Natural killer cell (primary cell): ENCODE measurements at regions of chr1 and their contacts with region 1.

Region 1: GRCh38 chr1:161021165-161021960 is 411 bp upstream of the F11R start:
- DNase-seq: peak; percentile 71 to 93
- ATAC-seq: peak; percentile 88 to 94 (median 93)
- H3K4me3 ChIP-seq: peak overlapping the region; percentile 87
- H3K4me3 Mint-ChIP-seq: peak overlapping the region; percentile 95
- H3K27ac ChIP-seq: peak overlapping the region; percentile 74
- H3K27ac Mint-ChIP-seq: peak overlapping the region; percentile 89 to 90
- H3K4me1 ChIP-seq: peaks cover 23% of the 10 kb centered on the region
- H3K4me1 Mint-ChIP-seq: peaks cover 28 to 38% of the 10 kb centered on the region in 2 donors
- H3K27me3 ChIP-seq: no peaks in the 10 kb centered on the region
- H3K27me3 Mint-ChIP-seq: no peaks in the 10 kb centered on the region
- CTCF ChIP-seq: no peak

Region 2: DNA sequence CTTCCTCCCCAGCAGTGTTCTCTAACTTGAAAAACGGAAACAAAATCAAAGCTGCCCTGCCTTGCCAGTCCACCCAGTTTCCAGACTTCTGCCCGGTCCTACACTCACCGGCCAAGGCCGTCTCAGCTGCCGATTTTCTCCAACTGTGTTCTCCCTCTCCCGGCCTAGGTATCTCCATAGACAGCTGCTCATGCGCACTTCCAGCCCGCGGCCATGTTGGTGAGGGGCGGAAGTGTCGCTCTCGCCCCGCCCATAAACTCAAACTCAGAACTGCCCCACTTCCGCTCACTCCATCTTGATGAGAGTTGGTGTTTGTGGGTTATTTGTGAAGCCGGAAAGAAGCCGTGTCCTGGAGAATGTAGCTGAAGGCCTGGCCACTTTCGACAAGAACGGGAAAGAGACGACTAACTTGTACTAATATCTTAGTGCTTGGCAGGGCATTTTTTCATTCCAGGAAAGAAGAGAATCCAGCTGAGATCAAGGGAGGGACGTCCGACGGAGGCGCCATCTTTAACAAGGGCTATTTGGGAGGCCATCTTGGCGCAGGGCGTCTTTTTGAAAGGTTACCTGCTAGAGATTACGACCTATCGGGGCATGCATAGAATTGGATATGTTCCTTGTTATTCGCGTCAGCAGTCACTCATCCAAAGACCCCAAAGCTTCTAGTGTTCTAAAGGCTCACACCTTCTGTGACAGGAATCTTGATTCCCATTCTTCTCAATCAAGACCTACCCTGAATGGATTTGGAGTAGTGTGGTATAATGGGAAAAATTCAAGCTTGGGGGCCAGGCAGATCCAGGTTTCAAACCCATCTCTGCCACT is 24.6 kb after region 1 on chr1 and contains the start of gene USF1:
- intact Hi-C with region 1: loop called (anchors 2 kb)
- DNase-seq: peak; percentile 93 to 98
- ATAC-seq: peak; percentile 79 to 92 (median 87)
- H3K4me3 ChIP-seq: peak within 1 kb of the TSS; percentile 90
- H3K4me3 Mint-ChIP-seq: peak within 1 kb of the TSS; percentile 97
- H3K27ac ChIP-seq: peak within 1 kb of the TSS; percentile 88
- H3K27ac Mint-ChIP-seq: peak within 1 kb of the TSS; percentile 98 to 99
- H3K4me1 ChIP-seq: peaks cover 35% of the 10 kb centered on the region
- H3K4me1 Mint-ChIP-seq: peaks cover 37 to 72% of the 10 kb centered on the region in 2 donors
- H3K27me3 ChIP-seq: no peaks in the 10 kb centered on the region
- H3K27me3 Mint-ChIP-seq: no peaks in the 10 kb centered on the region
- CTCF ChIP-seq: no peak
- total RNA-seq, gene USF1: 113 to 121 (median 114) TPM

Region 3: GRCh38 chr1:161092621-161093028 is 71.3 kb after region 1 on chr1:
- intact Hi-C with region 1: no loop called
- DNase-seq: no peak
- ATAC-seq: no peak
- H3K4me3 ChIP-seq: no peak overlapping the region
- H3K4me3 Mint-ChIP-seq: no peak overlapping the region
- H3K27ac ChIP-seq: no peak overlapping the region
- H3K27ac Mint-ChIP-seq: no peak overlapping the region
- H3K4me1 ChIP-seq: peaks cover 8% of the 10 kb centered on the region
- H3K4me1 Mint-ChIP-seq: peaks cover 8% of the 10 kb centered on the region in 2 donors
- H3K27me3 ChIP-seq: no peaks in the 10 kb centered on the region
- H3K27me3 Mint-ChIP-seq: peaks cover 0 to 10% of the 10 kb centered on the region in 2 donors
- CTCF ChIP-seq: no peak